ENCODE measurements at regions of chr17 and their contacts with region 1.

Region 1: DNA sequence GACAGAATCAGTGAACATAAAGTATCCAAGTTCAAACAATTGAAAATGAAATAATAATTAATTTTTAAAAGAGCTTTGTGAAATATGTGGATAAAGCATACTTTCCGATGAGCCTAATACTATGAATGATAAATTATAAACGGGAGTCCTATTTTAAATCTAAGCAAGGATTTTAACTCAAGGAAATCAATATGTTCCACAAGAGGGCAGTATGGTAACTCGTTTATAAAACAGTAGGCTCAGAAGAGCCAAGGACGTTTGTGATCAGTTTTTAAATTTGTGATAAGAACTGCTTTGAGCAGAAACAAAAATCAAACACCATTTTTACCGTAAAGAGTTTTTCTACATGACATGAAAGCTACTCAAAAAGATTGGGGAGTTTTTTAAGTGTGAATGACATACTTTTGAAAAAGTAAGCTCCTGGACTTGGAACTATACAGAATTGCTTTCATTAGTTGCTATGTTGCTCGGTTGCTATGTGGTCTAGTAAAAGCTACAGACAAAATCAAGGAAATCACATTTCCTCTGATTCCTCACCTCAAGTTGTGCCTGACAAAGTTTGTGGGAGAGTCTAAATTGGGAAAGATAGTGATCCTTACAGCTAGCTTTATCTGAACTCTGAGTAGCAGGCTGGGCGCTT is 11.8 kb upstream of the TEKT1 start:
- DNase-seq: peak in 4 of 5 donors; percentile 37 to 45 (median 38)
- H3K4me3 ChIP-seq: no peak overlapping the region
- H3K4me3 Mint-ChIP-seq: no peak overlapping the region
- H3K27ac ChIP-seq: no peak overlapping the region
- H3K27ac Mint-ChIP-seq: no peak overlapping the region
- H3K4me1 ChIP-seq: peaks cover 10% of the 10 kb centered on the region
- H3K4me1 Mint-ChIP-seq: peaks cover 0 to 6% (median 5%) of the 10 kb centered on the region in 4 donors
- H3K27me3 ChIP-seq: no peaks in the 10 kb centered on the region
- H3K27me3 Mint-ChIP-seq: peaks cover 16 to 31% of the 10 kb centered on the region in 2 donors

Region 2: GRCh38 chr17:6666077-6666521 is 177.3 kb before region 1 on chr17:
- CTCF ChIA-PET with region 1: interaction called, 6 read pairs
- POLR2A ChIA-PET with region 1: no interaction called
- intact Hi-C with region 1: loop called (anchors 5 kb)
- DNase-seq: peak in 3 of 5 donors; percentile 19 to 32 (median 25)
- H3K4me3 ChIP-seq: no peak overlapping the region
- H3K4me3 Mint-ChIP-seq: no peak overlapping the region
- H3K27ac ChIP-seq: no peak overlapping the region
- H3K27ac Mint-ChIP-seq: no peak overlapping the region
- H3K4me1 ChIP-seq: peaks cover 4% of the 10 kb centered on the region
- H3K4me1 Mint-ChIP-seq: peaks cover 2 to 9% (median 4%) of the 10 kb centered on the region in 4 donors
- H3K27me3 ChIP-seq: no peaks in the 10 kb centered on the region
- H3K27me3 Mint-ChIP-seq: no peaks in the 10 kb centered on the region

Region 3: DNA sequence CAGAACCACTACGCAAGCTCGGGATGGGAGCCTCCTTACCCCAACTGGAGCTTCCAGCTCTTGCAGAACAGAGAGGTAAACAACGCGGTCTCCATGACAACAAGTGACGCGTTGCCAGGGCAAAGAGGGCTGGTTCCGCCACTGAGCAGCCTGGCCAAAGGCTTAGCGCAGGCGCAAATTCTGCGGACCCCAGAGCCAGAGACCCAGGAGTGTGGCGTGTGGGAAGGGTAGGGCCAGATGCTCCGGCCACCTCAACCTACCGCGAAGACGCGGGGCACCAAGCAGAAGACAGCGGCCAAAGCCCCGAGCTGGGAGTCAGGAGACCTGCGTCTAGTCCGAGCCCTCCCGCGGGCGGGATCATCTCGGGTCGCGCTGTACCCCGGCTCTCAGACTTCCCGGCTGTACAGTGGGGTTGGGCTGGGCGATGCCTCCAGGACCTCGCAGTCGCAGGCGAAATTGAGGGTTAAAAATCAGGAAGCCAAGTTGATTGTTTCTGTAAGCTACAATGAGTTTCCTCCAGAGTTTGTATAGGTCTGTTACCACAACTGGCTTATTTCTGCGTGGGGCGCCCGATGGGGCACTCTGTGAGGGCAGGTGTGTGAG is 11.6 kb before region 1 on chr17 and contains the start of gene TEKT1:
- CTCF ChIA-PET with region 1: interaction called, 13 read pairs
- POLR2A ChIA-PET with region 1: no interaction called
- intact Hi-C with region 1: no loop called
- DNase-seq: peak; percentile 75 to 83 (median 78)
- H3K4me3 ChIP-seq: peak within 1 kb of the TSS in 1 of 2 donors; percentile 35
- H3K4me3 Mint-ChIP-seq: peak within 1 kb of the TSS; percentile 78 to 90 (median 85)
- H3K27ac ChIP-seq: no peak within 1 kb of the TSS
- H3K27ac Mint-ChIP-seq: peak within 1 kb of the TSS; percentile 68 to 96 (median 94)
- H3K4me1 ChIP-seq: peaks cover 13% of the 10 kb centered on the region
- H3K4me1 Mint-ChIP-seq: peaks cover 6 to 20% (median 18%) of the 10 kb centered on the region in 4 donors
- H3K27me3 ChIP-seq: peaks cover 31% of the 10 kb centered on the region
- H3K27me3 Mint-ChIP-seq: peaks cover 31 to 56% of the 10 kb centered on the region in 2 donors
- total RNA-seq, gene TEKT1: not detected

Region 4: GRCh38 chr17:6903326-6903900 is 60.1 kb after region 1 on chr17:
- CTCF ChIA-PET with region 1: no interaction called
- POLR2A ChIA-PET with region 1: no interaction called
- intact Hi-C with region 1: no loop called
- DNase-seq: no peak
- H3K4me3 ChIP-seq: no peak overlapping the region
- H3K4me3 Mint-ChIP-seq: no peak overlapping the region
- H3K27ac ChIP-seq: no peak overlapping the region
- H3K27ac Mint-ChIP-seq: no peak overlapping the region
- H3K4me1 ChIP-seq: no peaks in the 10 kb centered on the region
- H3K4me1 Mint-ChIP-seq: no peaks in the 10 kb centered on the region
- H3K27me3 ChIP-seq: no peaks in the 10 kb centered on the region
- H3K27me3 Mint-ChIP-seq: peaks cover 5 to 7% of the 10 kb centered on the region in 2 donors

Region 5: DNA sequence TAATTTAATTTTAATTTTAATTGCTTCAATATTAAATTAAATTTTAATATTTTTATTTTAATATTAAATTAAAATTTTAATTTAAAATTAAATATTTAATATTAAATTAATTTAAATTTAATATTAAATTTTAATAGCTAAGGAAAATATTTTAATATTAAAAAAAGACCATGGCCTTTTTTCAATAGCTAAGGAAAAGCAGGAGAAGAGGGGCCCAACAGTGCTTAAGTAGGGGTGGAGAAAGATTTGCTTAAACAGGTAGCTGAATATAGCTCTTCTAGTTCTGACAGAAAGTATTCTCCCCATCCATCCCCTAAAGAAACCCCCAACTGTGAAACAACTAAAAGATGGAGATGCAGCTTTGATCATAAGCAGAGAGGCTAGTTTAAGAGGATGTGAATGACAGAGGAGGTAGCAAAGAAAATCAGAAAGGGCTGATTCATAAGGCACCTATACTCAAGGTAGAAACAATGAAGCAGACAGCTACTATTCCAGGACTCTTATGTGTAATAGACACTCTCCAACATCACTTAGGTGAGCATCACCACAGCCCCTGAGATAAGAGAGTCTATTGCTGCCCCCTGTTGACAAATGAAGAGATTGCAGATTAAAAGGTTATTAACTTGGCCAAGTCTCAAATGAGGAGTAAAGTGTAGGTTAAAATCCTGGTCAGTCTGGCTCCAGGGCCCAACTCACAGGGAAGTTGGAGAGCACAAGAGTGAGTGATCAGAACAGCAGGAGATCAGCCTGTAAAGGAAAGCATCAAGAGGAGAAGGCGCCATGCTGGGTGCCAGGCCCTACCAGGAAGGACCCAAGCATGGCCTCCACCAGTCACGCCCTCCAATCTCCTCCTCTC is 161.3 kb after region 1 on chr17:
- CTCF ChIA-PET with region 1: interaction called, 48 read pairs
- POLR2A ChIA-PET with region 1: interaction called, 3 read pairs
- intact Hi-C with region 1: loop called (anchors 1 kb)
- DNase-seq: peak; percentile 66 to 77 (median 77)
- H3K4me3 ChIP-seq: no peak overlapping the region
- H3K4me3 Mint-ChIP-seq: peak overlapping the region in 1 of 8 donors; percentile 5
- H3K27ac ChIP-seq: no peak overlapping the region
- H3K27ac Mint-ChIP-seq: peak overlapping the region; percentile 7 to 89 (median 81)
- H3K4me1 ChIP-seq: peaks cover 19% of the 10 kb centered on the region
- H3K4me1 Mint-ChIP-seq: peaks cover 16 to 33% (median 28%) of the 10 kb centered on the region in 4 donors
- H3K27me3 ChIP-seq: no peaks in the 10 kb centered on the region
- H3K27me3 Mint-ChIP-seq: no peaks in the 10 kb centered on the region

Region 6: GRCh38 chr17:7136266-7136877 is 293.0 kb after region 1 on chr17:
- CTCF ChIA-PET with region 1: interaction called, 5 read pairs
- POLR2A ChIA-PET with region 1: no interaction called
- intact Hi-C with region 1: loop called (anchors 5 kb)
- DNase-seq: peak; percentile 65 to 78 (median 70)
- H3K4me3 ChIP-seq: no peak overlapping the region
- H3K4me3 Mint-ChIP-seq: peak overlapping the region in 1 of 8 donors; percentile 53
- H3K27ac ChIP-seq: no peak overlapping the region
- H3K27ac Mint-ChIP-seq: peak overlapping the region in 4 of 7 donors; percentile 0 to 68 (median 36)
- H3K4me1 ChIP-seq: peaks cover 22% of the 10 kb centered on the region
- H3K4me1 Mint-ChIP-seq: peaks cover 14 to 25% (median 21%) of the 10 kb centered on the region in 4 donors
- H3K27me3 ChIP-seq: no peaks in the 10 kb centered on the region
- H3K27me3 Mint-ChIP-seq: peaks cover 5 to 11% of the 10 kb centered on the region in 2 donors

Measured in CD4-positive, alpha-beta memory T cell (primary cell).